Panc1 (cell line): ENCODE measurements at regions of chr19 and their contacts with region 1.

Region 1: DNA sequence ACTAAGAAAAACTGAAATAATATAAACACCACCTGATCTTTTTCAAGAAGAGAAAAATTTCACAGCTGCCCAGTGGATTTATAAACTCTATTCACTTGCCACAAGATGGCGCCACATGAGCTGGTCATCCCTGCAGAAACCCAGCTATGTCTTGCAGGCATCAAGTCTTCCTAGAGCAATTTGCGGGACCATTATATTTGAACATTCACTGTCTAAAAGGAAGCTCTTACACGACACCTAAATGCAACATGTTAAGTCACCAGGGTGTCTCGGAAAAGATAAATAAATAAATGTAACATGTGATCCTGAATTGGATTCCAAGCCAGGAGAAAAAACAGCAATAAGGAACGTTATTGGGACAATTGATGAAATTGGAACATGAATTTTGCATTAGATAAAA is 20.3 kb upstream of the AKT2 start:
- DNase-seq: peak; percentile 100
- ATAC-seq: peak; percentile 92
- H3K4me3 ChIP-seq: no peak overlapping the region
- H3K27ac ChIP-seq: no peak overlapping the region
- H3K4me1 ChIP-seq: no peaks in the 10 kb centered on the region
- H3K27me3 ChIP-seq: peaks cover 11% of the 10 kb centered on the region
- CTCF ChIP-seq: no peak

Region 2: DNA sequence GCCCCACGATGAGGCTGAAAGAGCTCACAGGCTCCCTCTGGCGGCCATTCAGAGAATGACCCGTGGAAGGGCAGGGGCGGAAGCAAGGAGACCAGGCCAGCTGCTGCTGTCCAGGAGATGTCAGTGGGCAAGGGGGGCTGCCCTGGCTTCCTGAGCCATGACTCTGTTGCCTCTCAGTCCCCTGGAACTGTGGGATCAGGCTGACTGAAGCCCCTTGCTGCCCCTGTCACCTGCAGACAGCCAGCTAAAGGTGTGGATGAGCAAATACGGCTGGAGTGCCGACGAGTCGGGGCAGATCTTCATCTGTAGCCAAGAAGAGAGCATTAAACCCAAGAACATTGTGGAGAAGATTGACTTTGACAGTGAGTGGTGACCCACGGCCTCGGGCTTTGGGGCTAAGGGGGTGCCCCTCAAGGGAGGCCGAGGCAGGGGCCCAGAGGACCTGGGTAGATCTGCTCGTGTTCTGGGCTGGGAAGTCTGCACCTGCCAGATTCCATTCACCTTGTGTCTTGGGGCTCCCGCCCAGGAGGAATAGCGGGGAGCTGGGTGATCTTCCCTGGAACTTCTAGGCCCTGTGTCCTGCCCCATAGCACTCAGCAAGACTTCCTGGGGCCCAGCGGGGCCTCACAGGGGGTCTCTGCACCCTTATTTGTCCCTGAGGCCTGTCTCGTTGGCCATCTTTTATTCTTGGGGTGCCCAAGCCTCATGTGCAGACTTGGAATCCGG is 1670.5 kb before region 1 on chr19:
- CTCF ChIA-PET with region 1: interaction called, 10 read pairs
- POLR2A ChIA-PET with region 1: no interaction called
- in situ Hi-C with region 1: no loop called
- intact Hi-C with region 1: no loop called
- DNase-seq: no peak
- ATAC-seq: peak; percentile 73
- H3K4me3 ChIP-seq: no peak overlapping the region
- H3K27ac ChIP-seq: no peak overlapping the region
- H3K4me1 ChIP-seq: peaks cover 4% of the 10 kb centered on the region; the same call in 1 of the 2 replicates
- H3K27me3 ChIP-seq: no peaks in the 10 kb centered on the region
- CTCF ChIP-seq: no peak

Region 3: GRCh38 chr19:40133491-40133890 is 171.9 kb before region 1 on chr19:
- CTCF ChIA-PET with region 1: interaction called, 274 read pairs
- POLR2A ChIA-PET with region 1: interaction called, 4 read pairs
- in situ Hi-C with region 1: loop called (anchors 5 kb)
- intact Hi-C with region 1: no loop called
- DNase-seq: no peak
- ATAC-seq: peak; percentile 44
- H3K4me3 ChIP-seq: no peak overlapping the region
- H3K27ac ChIP-seq: no peak overlapping the region
- H3K4me1 ChIP-seq: no peaks in the 10 kb centered on the region
- H3K27me3 ChIP-seq: peaks cover 87% of the 10 kb centered on the region
- CTCF ChIP-seq: no peak

Region 4: GRCh38 chr19:40174092-40174491 is 131.3 kb before region 1 on chr19:
- CTCF ChIA-PET with region 1: interaction called, 19 read pairs
- POLR2A ChIA-PET with region 1: interaction called, 4 read pairs
- in situ Hi-C with region 1: no loop called
- intact Hi-C with region 1: no loop called
- DNase-seq: no peak
- ATAC-seq: no peak
- H3K4me3 ChIP-seq: no peak overlapping the region
- H3K27ac ChIP-seq: no peak overlapping the region
- H3K4me1 ChIP-seq: no peaks in the 10 kb centered on the region
- H3K27me3 ChIP-seq: 0 out of 2 replicates have a peak, but pooled peaks cover 2% of the 10 kb centered on the region
- CTCF ChIP-seq: no peak

Region 5: DNA sequence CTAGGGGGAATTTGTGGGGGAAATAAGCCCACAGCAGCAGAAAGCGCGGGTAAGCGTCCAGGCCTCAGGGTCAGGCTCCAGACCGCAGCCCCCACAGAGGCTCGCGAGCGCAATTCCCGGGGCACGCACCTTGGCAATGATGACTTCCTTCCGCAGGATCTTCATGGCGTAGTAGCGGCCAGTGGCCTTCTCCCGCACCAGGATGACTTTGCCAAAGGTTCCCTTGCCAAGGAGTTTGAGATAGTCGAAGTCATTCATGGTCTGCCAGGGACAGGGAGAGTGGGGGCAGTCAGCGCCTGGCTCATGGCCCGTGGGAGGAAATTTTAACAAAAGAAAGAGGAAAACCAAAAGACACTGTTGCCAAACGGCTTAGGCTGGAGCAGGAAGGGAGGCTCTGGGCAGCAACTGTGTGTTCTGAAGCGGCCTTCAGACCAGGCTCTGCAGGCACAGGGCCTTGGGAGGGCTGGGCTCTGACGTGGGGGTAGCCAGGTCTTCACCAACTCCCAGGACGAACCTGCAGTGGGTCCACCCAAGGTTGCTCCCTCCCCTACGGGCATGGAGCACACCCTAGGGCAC is 63.5 kb before region 1 on chr19:
- CTCF ChIA-PET with region 1: interaction called, 35 read pairs
- POLR2A ChIA-PET with region 1: no interaction called
- in situ Hi-C with region 1: no loop called
- intact Hi-C with region 1: no loop called
- DNase-seq: no peak
- ATAC-seq: peak; percentile 5; the same call in 1 of the 2 replicates
- H3K4me3 ChIP-seq: no peak overlapping the region
- H3K27ac ChIP-seq: no peak overlapping the region
- H3K4me1 ChIP-seq: no peaks in the 10 kb centered on the region
- H3K27me3 ChIP-seq: no peaks in the 10 kb centered on the region
- CTCF ChIP-seq: no peak

Region 6: DNA sequence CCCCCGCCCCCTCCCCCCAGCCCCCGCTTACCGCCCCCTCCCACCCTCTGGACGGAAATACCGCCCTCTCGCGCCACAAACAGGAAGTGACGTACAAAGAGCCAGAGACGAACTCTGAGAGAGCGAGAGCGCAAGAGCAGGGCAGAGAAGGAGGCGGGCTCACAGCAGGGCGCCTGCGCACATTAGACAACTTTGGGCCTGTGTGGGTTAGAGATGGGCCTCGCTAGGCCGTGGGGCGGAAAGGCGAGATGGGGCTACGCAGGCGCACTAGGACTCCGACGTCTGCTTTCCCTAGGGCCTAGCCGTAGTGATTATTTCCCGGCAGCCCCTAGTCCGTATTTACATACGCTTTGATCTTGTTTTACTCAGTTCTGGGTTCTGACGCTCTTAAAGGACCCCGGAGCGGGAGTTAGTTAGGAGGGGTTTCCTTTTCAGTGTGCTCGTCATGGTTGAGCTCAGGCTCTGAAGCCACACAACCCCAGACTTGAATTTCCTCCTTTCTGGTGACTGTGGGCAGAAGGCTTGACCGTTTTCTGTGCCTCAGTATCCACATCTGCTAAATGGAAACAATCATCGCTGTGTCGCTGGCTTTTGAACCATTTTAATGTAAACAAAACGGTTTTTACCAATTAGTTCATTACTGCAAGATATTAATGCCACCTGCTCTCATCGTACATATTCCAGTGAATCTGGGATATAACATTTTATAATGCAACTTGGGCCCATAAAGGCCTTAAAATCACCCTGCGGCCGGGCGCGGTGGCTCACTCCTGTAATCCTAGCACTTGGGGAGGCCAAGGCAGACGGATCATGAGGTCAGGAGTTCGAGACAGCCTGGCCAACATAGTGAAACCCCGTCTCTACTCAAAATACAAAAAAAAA is 19.8 kb before region 1 on chr19:
- CTCF ChIA-PET with region 1: interaction called, 116 read pairs
- POLR2A ChIA-PET with region 1: interaction called, 7 read pairs
- in situ Hi-C with region 1: no loop called
- intact Hi-C with region 1: no loop called
- DNase-seq: peak; percentile 100
- ATAC-seq: peak; percentile 96
- H3K4me3 ChIP-seq: peak overlapping the region; percentile 36 to 47
- H3K27ac ChIP-seq: peak overlapping the region; percentile 89
- H3K4me1 ChIP-seq: peaks cover 51% of the 10 kb centered on the region
- H3K27me3 ChIP-seq: no peaks in the 10 kb centered on the region
- CTCF ChIP-seq: no peak

Region 7: GRCh38 chr19:40444192-40445028 is 139.0 kb after region 1 on chr19 and contains the start of gene SERTAD3:
- CTCF ChIA-PET with region 1: no interaction called
- POLR2A ChIA-PET with region 1: no interaction called
- in situ Hi-C with region 1: no loop called
- intact Hi-C with region 1: loop called (anchors 5 kb)
- DNase-seq: no peak
- ATAC-seq: peak; percentile 88
- H3K4me3 ChIP-seq: peak within 1 kb of the TSS; percentile 74 to 100
- H3K27ac ChIP-seq: peak within 1 kb of the TSS; percentile 89
- H3K4me1 ChIP-seq: peaks cover 9% of the 10 kb centered on the region
- H3K27me3 ChIP-seq: no peaks in the 10 kb centered on the region
- CTCF ChIP-seq: no peak
- total RNA-seq, gene SERTAD3: 35.7 TPM